BJ (cell line): ENCODE measurements at regions of chr6 and their contacts with region 1.

Region 1: GRCh38 chr6:159252955-159253508 is 83.8 kb downstream of the FNDC1 start:
- DNase-seq: no peak
- H3K4me3 ChIP-seq: no peak overlapping the region
- H3K27me3 ChIP-seq: no peaks in the 10 kb centered on the region
- CTCF ChIP-seq: peak; percentile 66

Region 2: GRCh38 chr6:159053781-159054398 is 199.1 kb before region 1 on chr6:
- CTCF ChIA-PET with region 1: no interaction called
- POLR2A ChIA-PET with region 1: no interaction called
- DNase-seq: no peak
- H3K4me3 ChIP-seq: no peak overlapping the region
- H3K27me3 ChIP-seq: peaks cover 5% of the 10 kb centered on the region; the same call in 1 of the 2 replicates
- CTCF ChIP-seq: no peak

Region 3: DNA sequence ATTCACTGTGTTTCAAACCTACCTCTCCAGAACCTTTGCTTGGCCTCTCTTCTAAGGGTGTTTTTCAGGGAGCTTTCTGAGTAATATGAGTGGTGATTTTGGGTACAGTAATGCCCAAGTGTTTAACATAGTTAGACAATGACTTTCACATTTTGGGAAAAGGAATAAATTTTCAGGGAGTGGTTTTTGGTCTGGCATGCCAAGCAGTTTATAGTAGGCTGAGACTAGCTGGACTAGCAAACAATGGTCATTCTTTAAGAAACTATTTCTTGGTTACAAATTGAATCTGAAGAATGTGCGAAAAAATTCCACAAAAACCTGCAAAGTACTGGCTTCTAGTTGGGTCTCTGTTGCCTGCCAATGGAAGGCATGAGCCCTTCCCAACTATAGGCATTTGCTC is 68.5 kb before region 1 on chr6:
- CTCF ChIA-PET with region 1: interaction called, 11 read pairs
- POLR2A ChIA-PET with region 1: no interaction called
- DNase-seq: peak; percentile 51
- H3K4me3 ChIP-seq: no peak overlapping the region
- H3K27me3 ChIP-seq: no peaks in the 10 kb centered on the region
- CTCF ChIP-seq: no peak

Region 4: GRCh38 chr6:159212028-159212427 is 41.0 kb before region 1 on chr6:
- CTCF ChIA-PET with region 1: interaction called, 11 read pairs
- POLR2A ChIA-PET with region 1: no interaction called
- DNase-seq: no peak
- H3K4me3 ChIP-seq: no peak overlapping the region
- H3K27me3 ChIP-seq: no peaks in the 10 kb centered on the region
- CTCF ChIP-seq: no peak

Region 5: GRCh38 chr6:159233365-159234101 is 19.5 kb before region 1 on chr6:
- CTCF ChIA-PET with region 1: interaction called, 17 read pairs
- POLR2A ChIA-PET with region 1: no interaction called
- DNase-seq: no peak
- H3K4me3 ChIP-seq: no peak overlapping the region
- H3K27me3 ChIP-seq: peaks cover 2% of the 10 kb centered on the region
- CTCF ChIP-seq: no peak

Region 6: GRCh38 chr6:159422041-159422984 is 169.3 kb after region 1 on chr6:
- CTCF ChIA-PET with region 1: no interaction called
- POLR2A ChIA-PET with region 1: no interaction called
- DNase-seq: no peak
- H3K4me3 ChIP-seq: no peak overlapping the region
- H3K27me3 ChIP-seq: no peaks in the 10 kb centered on the region
- CTCF ChIP-seq: no peak

Region 7: GRCh38 chr6:159842035-159842434 is 589.0 kb after region 1 on chr6:
- CTCF ChIA-PET with region 1: no interaction called
- POLR2A ChIA-PET with region 1: interaction called, 11 read pairs
- DNase-seq: no peak
- H3K4me3 ChIP-seq: no peak overlapping the region
- H3K27me3 ChIP-seq: no peaks in the 10 kb centered on the region
- CTCF ChIP-seq: peak; percentile 46